PC-9 (cell line): ENCODE measurements at regions of chr3 and their contacts with region 1.

Region 1: GRCh38 chr3:116140100-116140689 is 305.1 kb downstream of the LSAMP start:
- DNase-seq: no peak
- H3K4me3 ChIP-seq: no peak overlapping the region
- H3K27ac ChIP-seq: no peak overlapping the region
- H3K4me1 ChIP-seq: no peaks in the 10 kb centered on the region
- H3K27me3 ChIP-seq: no peaks in the 10 kb centered on the region
- CTCF ChIP-seq: peak; percentile 89

Region 2: DNA sequence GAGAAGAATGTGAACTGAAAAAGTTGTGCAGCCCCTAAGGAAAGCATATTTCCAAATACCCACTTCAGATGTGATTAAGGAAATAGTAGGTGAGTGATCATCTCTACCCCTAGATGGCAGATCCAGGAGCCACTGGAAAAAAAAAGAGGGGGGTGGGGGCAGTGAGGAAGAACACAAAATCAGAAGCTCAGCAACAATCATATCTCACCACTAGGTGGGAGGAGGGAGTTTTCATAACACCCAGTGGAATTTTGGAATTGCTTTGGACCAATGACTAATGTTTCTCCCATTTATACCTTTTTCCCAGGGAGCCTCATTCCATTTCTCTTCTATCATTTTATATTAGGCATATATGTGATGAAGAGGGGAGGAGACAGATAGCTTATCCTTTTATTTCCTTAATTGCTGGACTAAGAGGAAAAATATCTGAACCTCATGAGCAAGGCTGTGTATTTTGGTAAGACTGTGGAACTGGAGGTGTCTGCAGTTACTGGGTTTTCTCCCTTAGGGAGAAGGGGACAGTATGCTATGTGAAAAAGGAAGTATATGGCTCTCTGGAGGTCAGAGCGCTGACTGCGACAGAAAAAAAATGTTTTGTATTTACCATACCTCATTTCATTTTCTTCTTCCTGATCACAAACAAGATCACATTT is 153.5 kb before region 1 on chr3:
- CTCF ChIA-PET with region 1: no interaction called
- POLR2A ChIA-PET with region 1: no interaction called
- intact Hi-C with region 1: loop called (anchors 5 kb)
- DNase-seq: peak in 1 of 2 experiments; percentile 39
- H3K4me3 ChIP-seq: no peak overlapping the region
- H3K27ac ChIP-seq: no peak overlapping the region
- H3K4me1 ChIP-seq: no peaks in the 10 kb centered on the region
- H3K27me3 ChIP-seq: no peaks in the 10 kb centered on the region
- CTCF ChIP-seq: peak; percentile 57

Region 3: DNA sequence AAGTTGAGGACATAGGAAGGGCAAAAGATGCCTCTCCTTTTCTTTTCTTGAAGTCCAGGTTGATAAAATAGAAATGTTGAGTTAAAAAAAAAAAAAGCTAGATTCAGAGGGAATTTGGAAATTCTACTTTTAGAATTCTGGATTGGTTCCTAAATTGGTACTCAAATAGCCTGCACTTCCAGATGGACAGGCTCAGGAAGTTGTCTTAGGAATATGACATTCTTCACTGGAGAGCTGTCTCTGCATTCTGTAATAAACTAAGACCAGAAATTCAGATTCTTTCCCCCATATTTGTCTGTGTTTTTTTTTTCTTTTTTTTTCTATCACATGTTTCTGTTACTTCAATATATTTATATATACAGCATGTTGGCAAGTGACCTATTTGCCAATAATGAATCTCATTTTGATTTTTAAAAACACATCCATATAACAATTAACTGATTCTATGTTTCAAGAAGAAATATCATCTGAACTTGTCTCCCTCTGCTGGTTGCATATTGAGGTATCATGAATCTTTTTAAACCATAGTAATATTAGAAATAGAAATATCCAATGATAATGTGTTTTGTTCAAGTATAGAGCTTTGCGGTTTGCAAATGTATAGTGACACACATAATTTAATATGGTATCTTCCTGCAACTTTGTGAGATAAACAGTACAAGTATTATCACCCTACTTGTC is 313.6 kb after region 1 on chr3:
- CTCF ChIA-PET with region 1: no interaction called
- POLR2A ChIA-PET with region 1: no interaction called
- intact Hi-C with region 1: loop called (anchors 1 kb)
- DNase-seq: no peak
- H3K4me3 ChIP-seq: no peak overlapping the region
- H3K27ac ChIP-seq: no peak overlapping the region
- H3K4me1 ChIP-seq: no peaks in the 10 kb centered on the region
- H3K27me3 ChIP-seq: no peaks in the 10 kb centered on the region
- CTCF ChIP-seq: peak; percentile 33; the same call in 1 of the 2 replicates

Region 4: DNA sequence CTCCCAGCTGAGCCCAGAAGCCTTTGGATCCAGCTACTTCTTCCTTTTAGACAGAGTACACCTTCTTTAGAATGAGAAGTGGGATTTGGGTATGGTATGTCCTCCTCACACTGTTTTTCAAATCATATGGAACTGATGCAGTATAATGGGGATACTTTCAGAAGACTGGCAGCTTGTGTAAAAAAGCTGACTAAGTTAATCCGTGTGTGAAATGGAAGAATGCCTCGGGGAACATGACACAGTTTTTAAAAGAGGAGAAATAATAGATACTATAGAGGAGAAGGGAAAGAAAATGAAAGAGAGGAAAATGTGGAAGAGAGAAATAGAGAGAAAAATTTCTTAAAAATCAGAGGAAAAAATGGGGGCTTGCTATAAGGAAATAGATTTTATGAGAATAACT is 617.1 kb after region 1 on chr3:
- CTCF ChIA-PET with region 1: no interaction called
- POLR2A ChIA-PET with region 1: no interaction called
- intact Hi-C with region 1: loop called (anchors 1 kb)
- DNase-seq: no peak
- H3K4me3 ChIP-seq: no peak overlapping the region
- H3K27ac ChIP-seq: no peak overlapping the region
- H3K4me1 ChIP-seq: no peaks in the 10 kb centered on the region
- H3K27me3 ChIP-seq: no peaks in the 10 kb centered on the region
- CTCF ChIP-seq: no peak